Activated CD4-positive, alpha-beta memory T cell treated with anti-CD3 and anti-CD28 coated beads for 36 hours (primary cell): ENCODE measurements at regions of chr17 and their contacts with region 1.

Region 1: GRCh38 chr17:1573916-1574696 is 11.5 kb upstream of the PITPNA start:
- DNase-seq: peak; percentile 82
- H3K4me3 Mint-ChIP-seq: no peak overlapping the region
- H3K27ac Mint-ChIP-seq: no peak overlapping the region
- H3K4me1 Mint-ChIP-seq: no peaks in the 10 kb centered on the region
- H3K27me3 Mint-ChIP-seq: no peaks in the 10 kb centered on the region

Region 2: DNA sequence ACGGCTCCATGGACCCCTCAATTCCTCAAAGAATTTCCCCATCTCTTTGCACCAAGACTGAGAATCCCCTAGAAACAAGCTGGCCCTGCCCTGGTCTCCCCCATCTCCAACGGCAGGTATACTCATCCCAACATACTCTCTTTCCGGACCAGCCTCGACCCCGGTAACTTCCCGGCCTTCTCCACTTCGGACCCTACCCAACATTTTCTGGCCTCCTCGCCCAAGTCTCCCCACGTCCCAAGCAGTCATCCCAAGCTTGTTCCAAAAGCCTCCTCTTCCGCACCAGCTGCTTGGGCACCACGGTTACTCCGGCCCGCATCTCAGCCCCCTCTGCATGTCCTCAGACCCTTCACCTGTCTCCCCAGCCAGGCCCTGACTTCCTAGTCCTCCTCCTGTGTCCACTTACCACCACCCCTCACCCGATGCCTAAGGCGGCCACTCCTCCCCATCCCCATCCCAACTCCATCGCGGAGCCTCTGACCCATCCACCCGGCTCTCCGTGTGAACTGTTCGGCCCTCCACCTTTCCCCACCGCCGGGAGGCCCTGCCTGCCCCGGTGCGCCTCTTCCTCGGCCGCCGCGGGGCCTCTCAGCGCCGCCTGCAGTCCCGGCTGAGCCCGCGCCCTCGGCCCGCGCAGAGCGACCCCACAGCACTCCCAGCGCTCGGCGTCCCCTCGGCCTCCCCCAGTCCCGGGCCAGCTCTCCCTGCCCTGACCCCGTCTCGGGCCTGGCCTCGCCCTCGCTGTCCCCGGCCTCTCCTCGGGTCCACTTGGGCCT is 12.5 kb before region 1 on chr17:
- CTCF ChIA-PET with region 1: interaction called, 10 read pairs
- POLR2A ChIA-PET with region 1: no interaction called
- intact Hi-C with region 1: no loop called
- DNase-seq: peak; percentile 53
- H3K4me3 Mint-ChIP-seq: peak overlapping the region; percentile 82
- H3K27ac Mint-ChIP-seq: peak overlapping the region; percentile 49
- H3K4me1 Mint-ChIP-seq: peaks cover 38% of the 10 kb centered on the region
- H3K27me3 Mint-ChIP-seq: no peaks in the 10 kb centered on the region

Region 3: GRCh38 chr17:1606352-1607033 is 32.4 kb after region 1 on chr17:
- CTCF ChIA-PET with region 1: interaction called, 19 read pairs
- POLR2A ChIA-PET with region 1: no interaction called
- intact Hi-C with region 1: no loop called
- DNase-seq: peak; percentile 60
- H3K4me3 Mint-ChIP-seq: no peak overlapping the region
- H3K27ac Mint-ChIP-seq: peak overlapping the region; percentile 92
- H3K4me1 Mint-ChIP-seq: peaks cover 28% of the 10 kb centered on the region
- H3K27me3 Mint-ChIP-seq: no peaks in the 10 kb centered on the region

Region 4: GRCh38 chr17:1617620-1618174 is 43.6 kb after region 1 on chr17:
- CTCF ChIA-PET with region 1: interaction called, 26 read pairs
- POLR2A ChIA-PET with region 1: no interaction called
- intact Hi-C with region 1: no loop called
- DNase-seq: no peak
- H3K4me3 Mint-ChIP-seq: no peak overlapping the region
- H3K27ac Mint-ChIP-seq: no peak overlapping the region
- H3K4me1 Mint-ChIP-seq: no peaks in the 10 kb centered on the region
- H3K27me3 Mint-ChIP-seq: no peaks in the 10 kb centered on the region

Region 5: GRCh38 chr17:1648963-1649843 is 75.1 kb after region 1 on chr17:
- CTCF ChIA-PET with region 1: interaction called, 31 read pairs
- POLR2A ChIA-PET with region 1: interaction called, 3 read pairs
- intact Hi-C with region 1: no loop called
- DNase-seq: peak; percentile 95
- H3K4me3 Mint-ChIP-seq: peak overlapping the region; percentile 54
- H3K27ac Mint-ChIP-seq: no peak overlapping the region
- H3K4me1 Mint-ChIP-seq: peaks cover 26% of the 10 kb centered on the region
- H3K27me3 Mint-ChIP-seq: no peaks in the 10 kb centered on the region